ENCODE measurements at regions of chr18 and their contacts with region 1.

Region 1: DNA sequence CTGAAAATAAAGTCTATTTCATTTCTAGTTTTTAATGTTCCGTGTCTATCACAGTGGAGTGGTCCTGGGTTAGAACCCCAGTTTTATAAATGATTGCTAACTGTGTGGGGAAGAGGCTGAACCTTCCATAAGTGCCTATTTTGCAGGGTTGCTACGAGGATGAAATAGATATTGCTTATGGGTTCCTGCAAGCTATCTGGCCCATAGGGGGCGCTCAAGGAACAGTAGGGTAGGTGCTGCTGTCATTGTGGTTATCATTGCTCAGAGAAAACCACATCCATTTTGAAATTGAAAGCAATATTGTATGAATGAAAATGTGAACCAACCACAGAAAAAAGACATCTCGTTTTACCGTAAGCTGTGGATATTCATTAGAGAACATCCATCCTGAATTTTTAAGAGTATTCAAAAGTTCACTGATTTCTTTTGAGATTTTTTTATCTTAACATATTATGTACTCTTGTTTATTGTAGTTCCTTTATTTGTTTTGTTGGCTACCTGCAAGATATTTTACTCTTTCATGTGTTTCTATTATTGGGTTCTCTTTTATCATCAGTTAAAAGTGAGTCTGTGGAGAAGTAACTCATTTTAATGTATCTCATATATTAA is 261.6 kb downstream of the NAPG start:
- DNase-seq: peak; percentile 71
- CTCF ChIP-seq: peak; percentile 77

Region 2: GRCh38 chr18:10771053-10771709 is 16.2 kb before region 1 on chr18:
- CTCF ChIA-PET with region 1: interaction called, 23 read pairs
- POLR2A ChIA-PET with region 1: no interaction called
- DNase-seq: peak; percentile 27
- CTCF ChIP-seq: no peak

Region 3: DNA sequence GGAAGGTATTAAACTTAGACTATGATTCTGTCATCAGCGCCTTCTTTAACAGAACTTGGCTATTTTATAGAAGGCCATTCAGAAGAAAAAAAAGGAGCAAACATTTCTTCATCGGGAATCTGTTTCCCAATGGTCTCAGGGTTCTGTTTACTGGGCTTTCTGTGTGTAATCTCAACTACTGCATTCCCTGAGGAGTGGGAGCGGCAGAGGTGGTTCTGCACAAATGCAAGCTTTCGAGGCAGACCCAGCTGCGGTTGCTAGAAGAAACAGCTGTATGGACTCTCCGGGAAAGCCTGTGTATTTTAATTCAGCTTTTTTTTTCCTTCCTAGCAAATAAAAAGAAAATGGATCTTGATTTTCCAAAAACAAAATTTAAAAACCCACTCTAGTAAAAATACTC is 10.9 kb before region 1 on chr18:
- CTCF ChIA-PET with region 1: interaction called, 23 read pairs
- POLR2A ChIA-PET with region 1: no interaction called
- DNase-seq: no peak
- CTCF ChIP-seq: no peak

Region 4: DNA sequence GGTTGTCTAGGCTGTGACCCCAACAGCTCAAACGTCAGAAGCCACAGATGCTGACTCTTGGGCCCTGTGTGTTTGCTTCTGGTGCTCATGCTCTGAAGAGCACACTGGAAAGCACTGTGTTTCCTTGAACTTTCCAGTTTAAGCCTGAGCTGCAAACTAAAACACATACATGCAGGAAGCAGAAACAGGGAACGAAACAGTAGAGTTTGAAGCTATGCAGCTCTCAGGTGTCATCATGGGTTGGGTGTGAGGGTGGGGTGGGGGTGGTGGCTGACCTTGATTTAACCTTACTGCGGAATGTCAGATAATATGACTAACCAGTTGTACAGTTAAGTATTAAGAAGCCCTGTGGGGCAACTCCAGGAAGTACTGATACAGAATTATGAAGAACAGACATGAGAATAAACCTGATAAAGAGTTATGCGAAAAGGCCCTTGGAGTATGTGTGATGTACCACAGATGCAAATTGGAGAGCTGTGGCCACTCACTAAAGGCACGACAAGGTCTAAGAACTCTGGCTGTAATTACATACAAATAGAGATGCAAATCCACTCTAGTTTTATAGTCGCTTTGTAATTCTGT is 11.4 kb after region 1 on chr18:
- CTCF ChIA-PET with region 1: interaction called, 24 read pairs
- POLR2A ChIA-PET with region 1: no interaction called
- DNase-seq: no peak
- CTCF ChIP-seq: no peak

Region 5: DNA sequence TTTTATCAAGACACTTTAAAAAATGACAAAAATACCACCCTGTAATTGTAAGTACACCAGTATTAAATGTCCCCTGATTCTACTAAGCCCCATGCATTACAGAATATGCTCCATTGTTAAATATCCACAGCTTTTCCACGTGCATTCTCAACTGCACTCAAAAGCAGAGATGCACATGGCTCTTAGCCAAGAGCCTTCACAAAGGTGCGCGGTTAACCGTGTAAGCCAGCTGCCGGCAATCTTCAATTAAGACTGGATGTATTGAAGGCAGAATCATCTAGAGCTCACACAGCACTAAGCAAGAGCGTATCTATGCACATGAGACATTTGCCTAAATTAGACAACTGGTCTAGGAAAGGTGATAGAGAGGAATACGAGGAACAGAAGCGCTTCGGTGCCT is 16.7 kb after region 1 on chr18:
- CTCF ChIA-PET with region 1: interaction called, 24 read pairs
- POLR2A ChIA-PET with region 1: no interaction called
- DNase-seq: no peak
- CTCF ChIP-seq: no peak

Region 6: DNA sequence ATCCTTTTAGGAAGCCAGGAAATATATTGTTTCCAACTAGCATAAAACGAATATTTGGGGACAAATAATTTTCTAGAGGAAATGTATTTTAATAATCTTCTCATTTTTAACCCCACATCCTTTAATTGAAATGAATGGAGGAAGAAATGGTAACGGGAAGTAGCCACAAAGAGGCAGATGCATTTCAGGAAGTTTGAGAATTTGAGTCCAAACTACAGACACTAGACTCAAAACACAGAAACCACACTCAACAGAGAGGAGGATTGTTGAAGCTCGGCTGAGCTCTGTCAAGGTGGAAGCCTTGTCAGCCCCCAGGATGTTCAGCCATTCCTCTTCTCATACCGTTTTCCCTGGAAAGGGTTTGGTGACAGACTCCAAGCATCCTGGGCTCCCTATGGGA is 26.9 kb after region 1 on chr18:
- CTCF ChIA-PET with region 1: interaction called, 12 read pairs
- POLR2A ChIA-PET with region 1: no interaction called
- DNase-seq: no peak
- CTCF ChIP-seq: no peak

Region 7: DNA sequence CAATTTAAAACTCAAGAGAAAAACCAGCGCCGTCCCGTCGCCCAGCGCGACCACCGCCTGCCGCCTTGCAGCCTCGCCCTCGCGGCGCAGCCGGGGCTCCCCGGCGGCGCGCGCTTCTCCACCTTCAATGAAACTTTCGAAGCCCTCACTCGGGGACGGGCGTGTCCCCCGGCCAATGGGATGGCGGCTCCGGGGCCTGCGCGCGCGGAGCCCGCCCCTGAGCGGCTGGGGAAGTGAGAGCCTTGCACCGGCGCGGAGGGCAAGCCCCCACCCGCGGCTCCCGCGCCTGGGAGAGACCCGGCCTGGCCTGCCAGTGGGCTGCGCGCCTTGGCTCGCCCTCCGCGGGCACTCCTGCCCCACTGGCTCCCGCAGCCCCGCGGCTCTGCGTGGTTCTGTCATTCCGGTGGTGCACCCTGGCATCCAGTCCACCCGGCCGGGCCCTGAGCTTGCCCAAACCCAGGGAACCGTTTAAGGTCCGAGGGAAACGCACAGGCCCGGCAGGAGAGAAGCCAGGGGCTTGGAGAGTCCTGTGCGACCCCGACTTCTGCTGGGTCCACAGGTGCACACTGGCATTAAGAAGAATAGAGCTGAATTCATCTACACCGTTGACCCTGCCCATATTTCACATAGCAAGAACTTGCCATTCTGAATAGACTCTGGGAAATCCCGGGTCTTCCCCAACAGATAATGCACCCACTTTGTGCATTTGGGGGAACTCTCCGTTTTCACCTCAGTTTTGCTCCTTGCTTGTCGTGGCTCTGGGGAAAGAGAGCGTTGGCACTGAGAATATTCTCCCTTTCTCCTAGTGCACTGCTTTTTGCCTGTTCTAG is 362.3 kb after region 1 on chr18 and contains the start of gene PIEZO2:
- CTCF ChIA-PET with region 1: interaction called, 40 read pairs
- POLR2A ChIA-PET with region 1: no interaction called
- DNase-seq: peak; percentile 92
- CTCF ChIP-seq: no peak